ENCODE measurements at regions of chr17 and their contacts with region 1.

Region 1: DNA sequence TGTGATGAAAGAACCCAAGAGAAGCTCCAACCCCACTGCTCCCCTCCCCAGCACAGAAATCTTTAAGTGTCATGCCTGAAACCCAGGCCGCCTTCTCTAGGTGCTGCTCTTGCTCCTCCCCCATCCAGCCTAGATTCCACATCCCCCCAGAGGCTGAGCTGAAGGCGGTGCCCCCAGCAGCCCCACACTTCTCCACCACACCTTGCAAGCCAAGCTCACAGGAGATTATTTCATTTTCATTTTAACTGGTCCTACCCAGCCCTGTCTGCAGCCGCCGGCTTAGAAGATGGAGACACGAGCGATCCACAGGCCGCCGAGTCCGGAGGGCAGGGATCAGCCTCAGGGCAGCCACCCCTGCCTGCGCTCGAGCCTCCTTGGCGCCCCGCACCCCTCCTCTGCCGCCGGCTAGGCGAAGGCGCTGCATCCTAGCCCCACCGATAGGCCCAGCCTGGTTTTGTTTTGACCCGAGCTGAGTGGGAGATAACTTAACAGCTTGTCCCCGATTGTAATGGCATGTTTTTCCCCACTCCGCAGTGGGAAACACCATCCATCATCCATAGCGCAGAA is 125.3 kb downstream of the RBFOX3 start:
- DNase-seq: no peak
- ATAC-seq: no peak
- H3K4me3 ChIP-seq: no peak overlapping the region
- H3K27ac ChIP-seq: no peak overlapping the region
- H3K4me1 ChIP-seq: no peaks in the 10 kb centered on the region
- H3K27me3 ChIP-seq: peaks cover 3 to 72% (median 8%) of the 10 kb centered on the region in 3 donors
- CTCF ChIP-seq: no peak

Region 2: DNA sequence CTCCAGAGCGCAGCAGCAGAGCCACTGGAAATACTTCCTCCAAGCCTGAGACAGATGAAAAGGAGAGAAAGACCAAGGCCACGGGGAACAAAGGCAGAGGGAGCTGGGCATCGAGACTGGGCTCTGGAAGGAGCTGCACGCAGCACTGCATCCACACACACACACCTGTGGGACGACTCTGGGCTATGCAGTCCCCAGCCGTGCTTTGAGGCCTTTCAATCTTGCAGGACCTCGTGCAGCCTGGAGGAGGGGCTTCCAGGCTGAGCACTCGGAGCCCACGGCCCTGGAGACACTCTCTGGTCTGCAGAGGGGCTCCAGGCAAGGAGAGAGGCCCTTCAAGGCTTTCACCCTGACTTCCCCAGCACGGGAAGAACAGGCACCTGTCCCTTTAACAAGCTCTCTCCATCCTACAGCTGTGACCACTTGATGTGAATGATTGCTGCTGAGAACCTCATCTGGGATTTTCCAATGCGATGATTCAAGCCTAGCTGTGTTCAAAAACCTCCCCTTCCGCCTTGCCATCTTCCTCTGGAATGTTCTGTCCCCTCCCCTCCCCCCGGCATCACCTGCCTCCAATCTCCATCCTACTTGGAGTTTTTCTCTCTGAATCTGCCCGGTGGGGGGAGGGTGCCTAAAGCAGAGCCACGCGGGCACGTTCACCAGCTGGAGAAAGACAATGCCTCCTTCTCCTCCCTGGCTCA is 87.8 kb after region 1 on chr17:
- intact Hi-C with region 1: loop called in 1 of 2 experiments (anchors 5 kb)
- DNase-seq: no peak
- ATAC-seq: no peak
- H3K4me3 ChIP-seq: no peak overlapping the region
- H3K27ac ChIP-seq: no peak overlapping the region
- H3K4me1 ChIP-seq: no peaks in the 10 kb centered on the region
- H3K27me3 ChIP-seq: peaks cover 0 to 45% (median 8%) of the 10 kb centered on the region in 3 donors
- CTCF ChIP-seq: no peak

Region 3: GRCh38 chr17:79589669-79590522 is 104.4 kb after region 1 on chr17:
- intact Hi-C with region 1: no loop called
- DNase-seq: no peak
- ATAC-seq: no peak
- H3K4me3 ChIP-seq: no peak overlapping the region
- H3K27ac ChIP-seq: no peak overlapping the region
- H3K4me1 ChIP-seq: no peaks in the 10 kb centered on the region
- H3K27me3 ChIP-seq: peaks cover 0 to 51% (median 20%) of the 10 kb centered on the region in 3 donors
- CTCF ChIP-seq: no peak

Measured in psoas muscle (tissue), 8 donors.